ENCODE measurements at regions of chr5 and their contacts with region 1.

Region 1: GRCh38 chr5:60843936-60844905 is at the start of gene ELOVL7:
- DNase-seq: peak; percentile 92 to 96
- H3K4me3 ChIP-seq: peak within 1 kb of the TSS; percentile 97
- H3K4me3 Mint-ChIP-seq: peak within 1 kb of the TSS; percentile 96
- H3K27ac Mint-ChIP-seq: peak within 1 kb of the TSS; percentile 86
- H3K4me1 ChIP-seq: peaks cover 4% of the 10 kb centered on the region; the same call in 1 of the 2 replicates
- H3K4me1 Mint-ChIP-seq: peaks cover 31% of the 10 kb centered on the region
- H3K27me3 ChIP-seq: 0 out of 2 replicates have a peak, but pooled peaks cover 2% of the 10 kb centered on the region
- H3K27me3 Mint-ChIP-seq: no peaks in the 10 kb centered on the region
- CTCF ChIP-seq: peak; percentile 36 to 56
- total RNA-seq, gene ELOVL7: 16.4 and 19.1 TPM in 2 replicates

Region 2: GRCh38 chr5:60810438-60811085 is 33.7 kb before region 1 on chr5:
- CTCF ChIA-PET with region 1: no interaction called
- POLR2A ChIA-PET with region 1: interaction called, 3 read pairs
- intact Hi-C with region 1: loop called (anchors 1 kb)
- DNase-seq: peak in 1 of 2 experiments; percentile 26
- H3K4me3 ChIP-seq: no peak overlapping the region
- H3K4me3 Mint-ChIP-seq: peak overlapping the region; percentile 10
- H3K27ac Mint-ChIP-seq: peak overlapping the region; percentile 65
- H3K4me1 ChIP-seq: peaks cover 51% of the 10 kb centered on the region
- H3K4me1 Mint-ChIP-seq: peaks cover 41% of the 10 kb centered on the region
- H3K27me3 ChIP-seq: no peaks in the 10 kb centered on the region
- H3K27me3 Mint-ChIP-seq: no peaks in the 10 kb centered on the region
- CTCF ChIP-seq: no peak

Region 3: GRCh38 chr5:60891667-60892066 is 47.4 kb after region 1 on chr5:
- CTCF ChIA-PET with region 1: no interaction called
- POLR2A ChIA-PET with region 1: no interaction called
- intact Hi-C with region 1: loop called (anchors 10 kb)
- DNase-seq: no peak
- H3K4me3 ChIP-seq: no peak overlapping the region
- H3K4me3 Mint-ChIP-seq: no peak overlapping the region
- H3K27ac Mint-ChIP-seq: no peak overlapping the region
- H3K4me1 ChIP-seq: no peaks in the 10 kb centered on the region
- H3K4me1 Mint-ChIP-seq: no peaks in the 10 kb centered on the region
- H3K27me3 ChIP-seq: no peaks in the 10 kb centered on the region
- H3K27me3 Mint-ChIP-seq: no peaks in the 10 kb centered on the region
- CTCF ChIP-seq: no peak

Region 4: GRCh38 chr5:60916646-60917045 is 72.4 kb after region 1 on chr5:
- CTCF ChIA-PET with region 1: no interaction called
- POLR2A ChIA-PET with region 1: no interaction called
- intact Hi-C with region 1: no loop called
- DNase-seq: no peak
- H3K4me3 ChIP-seq: no peak overlapping the region
- H3K4me3 Mint-ChIP-seq: no peak overlapping the region
- H3K27ac Mint-ChIP-seq: no peak overlapping the region
- H3K4me1 ChIP-seq: no peaks in the 10 kb centered on the region
- H3K4me1 Mint-ChIP-seq: no peaks in the 10 kb centered on the region
- H3K27me3 ChIP-seq: no peaks in the 10 kb centered on the region
- H3K27me3 Mint-ChIP-seq: no peaks in the 10 kb centered on the region
- CTCF ChIP-seq: no peak

Region 5: GRCh38 chr5:60944904-60945812 is 100.9 kb after region 1 on chr5 and contains the starts of genes ERCC8 and NDUFAF2:
- CTCF ChIA-PET with region 1: interaction called, 3 read pairs
- POLR2A ChIA-PET with region 1: interaction called, 3 read pairs
- intact Hi-C with region 1: loop called (anchors 5 kb)
- DNase-seq: peak; percentile 93 to 94
- H3K4me3 ChIP-seq: peak within 1 kb of the TSS; percentile 42
- H3K4me3 Mint-ChIP-seq: no peak within 1 kb of the TSS
- H3K27ac Mint-ChIP-seq: no peak within 1 kb of the TSS
- H3K4me1 ChIP-seq: peaks cover 6% of the 10 kb centered on the region; the same call in 1 of the 2 replicates
- H3K4me1 Mint-ChIP-seq: no peaks in the 10 kb centered on the region
- H3K27me3 ChIP-seq: no peaks in the 10 kb centered on the region
- H3K27me3 Mint-ChIP-seq: no peaks in the 10 kb centered on the region
- CTCF ChIP-seq: no peak
- total RNA-seq, gene ERCC8: 18.3 and 19.8 TPM in 2 replicates
- total RNA-seq, gene NDUFAF2: 57.9 and 60.8 TPM in 2 replicates

Measured in Caco-2 (cell line).